ENCODE measurements at regions of chr3 and their contacts with region 1.

Region 1: DNA sequence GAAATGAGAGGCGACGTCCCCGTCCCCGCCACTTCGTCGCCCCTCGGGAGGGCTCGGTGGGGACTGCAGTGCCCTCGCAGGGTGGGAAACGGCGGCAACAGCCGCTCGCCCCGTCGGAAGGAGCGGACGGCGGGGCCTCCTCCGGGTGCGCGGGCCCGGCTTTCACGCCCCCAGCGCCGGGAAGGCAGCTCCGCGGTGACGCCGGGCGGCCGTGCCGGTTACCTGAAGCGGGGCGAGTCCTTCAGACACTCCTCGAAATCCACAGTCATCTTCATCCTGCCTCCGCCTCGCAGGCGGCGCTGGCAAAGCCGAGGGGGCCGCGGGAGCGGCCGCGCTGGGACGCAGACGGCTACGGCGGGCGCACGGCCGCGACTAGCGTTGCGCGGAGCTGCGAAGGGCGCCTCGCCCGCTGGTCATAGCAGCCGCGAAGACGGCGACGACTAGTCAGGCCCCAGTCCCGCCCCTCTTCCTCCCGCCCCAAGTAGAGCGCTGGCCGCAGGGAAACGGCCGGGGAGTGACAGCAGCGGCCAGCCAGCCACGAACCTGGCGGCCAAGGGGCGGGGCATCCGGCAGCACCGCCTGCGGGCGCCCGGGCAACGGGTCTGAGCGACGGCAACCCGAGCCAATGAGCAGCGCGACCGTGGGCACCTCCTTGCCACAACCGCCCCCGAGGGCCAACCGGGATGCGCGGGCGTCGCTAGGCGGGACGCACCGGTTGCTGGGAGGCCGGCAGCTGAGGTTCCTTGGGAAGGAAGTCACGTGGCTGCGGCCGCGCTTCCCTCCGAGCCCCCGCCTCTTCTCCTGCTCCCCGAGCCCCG is at the start of gene ACAP2:
- DNase-seq: peak; percentile 100
- H3K4me3 ChIP-seq: peak within 1 kb of the TSS; percentile 94
- H3K27ac ChIP-seq: peak within 1 kb of the TSS; percentile 92
- H3K4me1 ChIP-seq: peaks cover 22% of the 10 kb centered on the region
- H3K27me3 ChIP-seq: no peaks in the 10 kb centered on the region
- CTCF ChIP-seq: no peak
- total RNA-seq, gene ACAP2: 45.5 and 47.4 TPM in 2 replicates

Region 2: GRCh38 chr3:195410546-195410945 is 32.2 kb before region 1 on chr3:
- CTCF ChIA-PET with region 1: no interaction called
- POLR2A ChIA-PET with region 1: no interaction called
- intact Hi-C with region 1: loop called (anchors 1 kb)
- DNase-seq: no peak
- H3K4me3 ChIP-seq: no peak overlapping the region
- H3K27ac ChIP-seq: no peak overlapping the region
- H3K4me1 ChIP-seq: no peaks in the 10 kb centered on the region
- H3K27me3 ChIP-seq: no peaks in the 10 kb centered on the region
- CTCF ChIP-seq: no peak

Region 3: GRCh38 chr3:196739671-196740480 is 1297.1 kb after region 1 on chr3 and contains the start of gene PAK2:
- CTCF ChIA-PET with region 1: no interaction called
- POLR2A ChIA-PET with region 1: interaction called, 13 read pairs
- intact Hi-C with region 1: no loop called
- DNase-seq: peak; percentile 96
- H3K4me3 ChIP-seq: peak within 1 kb of the TSS; percentile 95
- H3K27ac ChIP-seq: peak within 1 kb of the TSS; percentile 97
- H3K4me1 ChIP-seq: peaks cover 9% of the 10 kb centered on the region
- H3K27me3 ChIP-seq: no peaks in the 10 kb centered on the region
- CTCF ChIP-seq: no peak
- total RNA-seq, gene PAK2: 93.2 and 102 TPM in 2 replicates